BJ (cell line): ENCODE measurements at regions of chr22 and their contacts with region 1.

Region 1: GRCh38 chr22:34255042-34255441 is 334.8 kb upstream of the LARGE1 start:
- DNase-seq: no peak
- H3K4me3 ChIP-seq: no peak overlapping the region
- H3K27me3 ChIP-seq: no peaks in the 10 kb centered on the region
- CTCF ChIP-seq: no peak

Region 2: DNA sequence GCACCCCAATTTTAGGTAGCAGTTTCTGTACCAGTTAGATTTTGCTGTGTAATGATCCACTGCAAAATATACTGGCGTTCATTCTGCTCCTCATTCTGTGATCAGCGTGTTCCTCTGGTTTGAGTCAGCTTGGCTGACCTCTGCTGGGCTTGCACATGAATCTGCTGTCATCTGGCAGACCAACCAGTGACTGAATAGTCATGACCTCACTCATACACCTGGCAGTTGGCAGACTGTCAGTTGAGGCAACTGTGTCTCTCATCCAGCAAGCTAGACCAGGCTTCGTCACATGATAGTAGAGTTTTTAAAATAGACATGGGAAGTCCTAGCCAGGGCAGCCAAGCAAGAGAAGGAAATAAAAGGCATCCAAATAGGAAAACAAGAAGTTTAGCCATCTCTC is 18.5 kb before region 1 on chr22:
- CTCF ChIA-PET with region 1: no interaction called
- POLR2A ChIA-PET with region 1: interaction called, 15 read pairs
- DNase-seq: no peak
- H3K4me3 ChIP-seq: no peak overlapping the region
- H3K27me3 ChIP-seq: no peaks in the 10 kb centered on the region
- CTCF ChIP-seq: no peak

Region 3: DNA sequence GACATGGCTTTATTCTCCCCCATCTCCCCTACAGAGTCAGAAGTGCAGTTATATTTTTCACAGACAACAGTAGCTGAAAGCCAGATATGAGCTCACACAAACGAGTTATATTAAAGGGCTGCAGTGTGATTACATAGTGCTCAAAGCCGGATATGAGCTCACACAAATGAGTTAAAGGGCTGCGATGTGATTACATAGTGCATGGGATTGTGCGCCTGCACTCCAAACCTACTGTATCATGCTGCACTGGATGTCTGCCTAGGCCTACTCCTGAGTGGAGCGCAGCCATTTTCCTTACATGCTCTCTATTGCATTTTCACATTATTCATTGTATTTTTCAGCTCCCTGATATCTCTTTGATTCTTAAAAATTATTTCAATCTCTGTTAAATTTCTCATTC is 79.9 kb after region 1 on chr22:
- CTCF ChIA-PET with region 1: no interaction called
- POLR2A ChIA-PET with region 1: no interaction called
- DNase-seq: no peak
- H3K4me3 ChIP-seq: no peak overlapping the region
- H3K27me3 ChIP-seq: no peaks in the 10 kb centered on the region
- CTCF ChIP-seq: no peak